Calu3 (cell line): ENCODE measurements at regions of chr4 and their contacts with region 1.

Region 1: DNA sequence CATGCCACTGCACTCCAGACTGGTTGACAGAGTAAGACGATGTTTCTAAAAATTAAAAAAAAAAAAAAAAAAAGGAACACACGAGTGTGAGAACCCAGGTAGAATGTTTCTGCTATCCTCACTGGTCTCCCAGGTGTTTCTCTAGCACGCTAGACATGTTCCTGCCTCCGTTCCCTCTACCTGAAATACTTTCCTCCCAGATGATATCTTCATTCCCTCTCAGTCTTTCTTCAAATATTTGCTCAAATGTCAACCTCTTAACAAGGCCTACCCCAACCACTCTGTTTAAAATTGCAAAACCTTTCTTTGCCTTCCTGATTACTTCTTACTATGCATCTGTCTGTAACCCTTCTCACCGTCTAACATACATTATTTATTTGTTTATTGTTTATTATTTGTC is 59.5 kb upstream of the ABCG2 start:
- DNase-seq: no peak
- H3K4me3 Mint-ChIP-seq: no peak overlapping the region
- H3K27ac Mint-ChIP-seq: no peak overlapping the region
- H3K4me1 Mint-ChIP-seq: no peaks in the 10 kb centered on the region
- H3K27me3 Mint-ChIP-seq: peaks cover 17% of the 10 kb centered on the region
- CTCF ChIP-seq: no peak

Region 2: GRCh38 chr4:88514557-88515511 is 296.9 kb after region 1 on chr4:
- CTCF ChIA-PET with region 1: interaction called, 35 read pairs
- intact Hi-C with region 1: loop called (anchors 1 kb)
- DNase-seq: no peak
- H3K4me3 Mint-ChIP-seq: no peak overlapping the region
- H3K27ac Mint-ChIP-seq: no peak overlapping the region
- H3K4me1 Mint-ChIP-seq: no peaks in the 10 kb centered on the region
- H3K27me3 Mint-ChIP-seq: no peaks in the 10 kb centered on the region
- CTCF ChIP-seq: no peak

Region 3: DNA sequence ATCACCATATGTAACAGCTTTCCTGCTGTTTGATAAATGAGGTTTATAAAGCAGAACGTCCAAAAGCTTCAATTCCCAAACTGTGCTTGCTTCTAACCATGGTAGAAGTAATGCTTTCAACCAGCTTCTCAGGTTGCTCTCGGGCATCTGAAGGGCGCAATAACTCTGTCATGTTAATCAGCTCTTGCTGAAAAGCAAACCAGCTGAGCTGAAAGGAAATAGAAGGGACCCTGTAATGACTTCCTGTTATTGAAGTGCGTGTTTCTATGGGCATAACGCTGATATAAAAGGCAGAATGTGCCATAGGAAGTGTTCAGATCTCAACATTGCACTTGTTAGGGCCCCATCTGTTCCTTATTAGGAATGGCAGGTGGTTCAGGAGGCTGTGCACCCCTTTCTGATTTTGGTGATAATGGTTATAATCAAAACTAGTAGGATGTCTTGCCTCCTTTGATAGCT is 395.5 kb after region 1 on chr4:
- CTCF ChIA-PET with region 1: no interaction called
- intact Hi-C with region 1: no loop called
- DNase-seq: peak; percentile 13
- H3K4me3 Mint-ChIP-seq: peak overlapping the region; percentile 30
- H3K27ac Mint-ChIP-seq: peak overlapping the region; percentile 98
- H3K4me1 Mint-ChIP-seq: peaks cover 49% of the 10 kb centered on the region
- H3K27me3 Mint-ChIP-seq: no peaks in the 10 kb centered on the region
- CTCF ChIP-seq: no peak